ENCODE measurements at regions of chr9 and their contacts with region 1.

Region 1: DNA sequence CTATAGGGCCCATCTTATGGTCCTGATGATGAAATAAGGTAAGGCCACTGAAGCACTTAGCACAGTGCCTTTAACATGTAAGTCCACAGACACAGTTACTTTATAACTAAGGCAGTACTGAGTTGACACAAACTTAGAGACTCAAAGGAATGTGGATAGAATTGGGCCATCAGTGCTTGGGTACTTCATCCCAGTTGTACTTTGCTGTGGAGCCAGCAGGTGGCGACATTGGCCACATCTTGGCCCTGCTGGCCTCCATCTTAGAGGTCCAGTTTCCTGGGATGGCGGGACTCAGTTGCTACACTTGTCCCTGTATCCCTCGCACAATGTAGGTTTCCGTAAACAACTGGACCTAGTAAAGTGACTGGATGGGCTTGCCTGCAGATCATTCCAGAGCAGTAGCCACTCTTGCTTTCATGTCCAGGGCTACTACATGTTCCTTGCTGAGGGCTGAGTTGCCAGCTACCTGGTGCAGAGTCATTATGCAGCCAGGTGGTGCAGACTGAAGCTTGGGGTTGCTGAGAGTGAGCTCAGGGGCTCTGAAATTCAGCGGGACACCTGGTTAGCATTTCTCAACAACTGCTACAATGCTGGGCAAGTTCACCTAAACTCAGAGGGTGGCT is 10.6 kb downstream of the MTAP start:
- DNase-seq: peak; percentile 80
- ATAC-seq: peak; percentile 35
- H3K4me3 Mint-ChIP-seq: no peak overlapping the region
- H3K27ac Mint-ChIP-seq: peak overlapping the region; percentile 55
- H3K4me1 Mint-ChIP-seq: peaks cover 53% of the 10 kb centered on the region
- H3K27me3 Mint-ChIP-seq: no peaks in the 10 kb centered on the region

Region 2: DNA sequence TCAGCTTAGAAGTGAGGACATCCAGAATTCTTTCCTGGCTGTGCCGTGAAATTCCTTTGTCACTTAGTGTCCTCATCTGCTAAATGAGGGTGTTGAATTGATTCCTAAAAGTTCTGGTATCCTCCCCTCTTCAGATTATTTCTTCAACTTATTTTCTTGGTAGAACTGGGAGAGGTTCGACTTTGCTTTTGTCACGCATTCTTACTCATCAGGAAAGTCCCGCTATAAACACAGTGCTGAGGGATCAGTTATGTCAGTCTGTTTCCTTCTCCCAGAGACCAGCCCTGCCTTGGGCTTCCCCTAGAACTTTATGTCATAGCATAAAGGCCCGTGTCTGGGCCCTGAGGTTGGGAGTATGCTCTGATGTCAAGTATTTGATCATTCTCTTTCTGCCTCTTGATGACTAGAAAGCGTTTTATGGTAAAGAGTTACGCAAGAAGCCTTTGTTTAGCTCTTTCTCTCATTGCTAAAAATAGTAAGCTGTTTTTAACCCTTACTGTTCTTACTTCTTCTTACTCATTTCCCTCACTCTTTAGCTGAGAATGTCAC is 19.0 kb after region 1 on chr9:
- CTCF ChIA-PET with region 1: interaction called, 4 read pairs
- POLR2A ChIA-PET with region 1: interaction called, 4 read pairs
- intact Hi-C with region 1: loop called in 1 of 2 experiments (anchors 2 kb)
- DNase-seq: peak; percentile 77
- ATAC-seq: peak; percentile 91
- H3K4me3 Mint-ChIP-seq: no peak overlapping the region
- H3K27ac Mint-ChIP-seq: peak overlapping the region; percentile 83
- H3K4me1 Mint-ChIP-seq: peaks cover 64% of the 10 kb centered on the region
- H3K27me3 Mint-ChIP-seq: no peaks in the 10 kb centered on the region

Region 3: GRCh38 chr9:22008736-22009562 is 195.9 kb after region 1 on chr9 and contains the start of gene CDKN2B:
- CTCF ChIA-PET with region 1: interaction called, 44 read pairs
- POLR2A ChIA-PET with region 1: no interaction called
- intact Hi-C with region 1: loop called (anchors 1 kb)
- DNase-seq: peak; percentile 82
- ATAC-seq: peak; percentile 87
- H3K4me3 Mint-ChIP-seq: peak within 1 kb of the TSS; percentile 76
- H3K27ac Mint-ChIP-seq: no peak within 1 kb of the TSS
- H3K4me1 Mint-ChIP-seq: peaks cover 20% of the 10 kb centered on the region
- H3K27me3 Mint-ChIP-seq: peaks cover 56% of the 10 kb centered on the region
- total RNA-seq, gene CDKN2B: not detected

Region 4: GRCh38 chr9:22052376-22052945 is 239.4 kb after region 1 on chr9:
- CTCF ChIA-PET with region 1: interaction called, 3 read pairs
- POLR2A ChIA-PET with region 1: no interaction called
- intact Hi-C with region 1: loop called in 1 of 2 experiments (anchors 1 kb)
- DNase-seq: peak; percentile 57
- ATAC-seq: peak; percentile 96
- H3K4me3 Mint-ChIP-seq: no peak overlapping the region
- H3K27ac Mint-ChIP-seq: no peak overlapping the region
- H3K4me1 Mint-ChIP-seq: peaks cover 30% of the 10 kb centered on the region
- H3K27me3 Mint-ChIP-seq: peaks cover 13% of the 10 kb centered on the region

Region 5: DNA sequence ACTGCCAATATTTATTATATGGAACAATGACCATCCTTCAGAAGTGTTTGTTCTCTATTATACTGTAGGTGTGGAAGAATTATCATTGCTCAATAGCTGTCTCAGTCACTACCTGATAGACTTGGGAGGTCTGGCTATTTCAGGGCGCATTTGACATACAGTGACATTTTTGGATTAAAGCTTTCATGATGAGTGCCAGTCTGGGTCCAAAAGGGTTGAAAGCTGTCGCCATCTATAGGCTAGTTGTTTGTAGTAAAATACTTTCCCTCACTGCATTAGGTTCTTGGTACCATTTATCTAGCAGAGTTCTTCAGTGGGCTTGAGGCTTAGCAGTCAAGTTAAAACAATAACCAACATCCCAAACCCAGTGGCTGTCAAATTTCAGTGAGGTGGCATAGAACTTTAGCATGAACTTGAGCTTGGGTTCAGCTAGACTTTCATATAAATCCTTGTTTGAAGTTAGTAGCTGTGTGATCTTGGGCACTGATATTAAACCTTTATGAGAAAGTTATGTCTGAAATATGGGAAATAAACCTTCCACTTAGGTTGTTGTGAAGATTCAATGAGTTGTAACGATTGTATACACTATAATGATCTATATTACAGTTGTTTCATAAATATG is 306.6 kb after region 1 on chr9:
- CTCF ChIA-PET with region 1: interaction called, 24 read pairs
- POLR2A ChIA-PET with region 1: no interaction called
- intact Hi-C with region 1: loop called (anchors 1 kb)
- DNase-seq: peak; percentile 15
- ATAC-seq: peak; percentile 42
- H3K4me3 Mint-ChIP-seq: no peak overlapping the region
- H3K27ac Mint-ChIP-seq: no peak overlapping the region
- H3K4me1 Mint-ChIP-seq: no peaks in the 10 kb centered on the region
- H3K27me3 Mint-ChIP-seq: peaks cover 30% of the 10 kb centered on the region

Region 6: GRCh38 chr9:22244141-22245011 is 431.3 kb after region 1 on chr9:
- CTCF ChIA-PET with region 1: interaction called, 17 read pairs
- POLR2A ChIA-PET with region 1: no interaction called
- intact Hi-C with region 1: loop called (anchors 1 kb)
- DNase-seq: peak; percentile 53
- ATAC-seq: peak; percentile 36
- H3K4me3 Mint-ChIP-seq: no peak overlapping the region
- H3K27ac Mint-ChIP-seq: no peak overlapping the region
- H3K4me1 Mint-ChIP-seq: peaks cover 22% of the 10 kb centered on the region
- H3K27me3 Mint-ChIP-seq: peaks cover 28% of the 10 kb centered on the region

Measured in activated CD4-positive, alpha-beta T cell treated with anti-CD3 and anti-CD28 coated beads for 36 hours (primary cell).